Mucosa of descending colon (tissue), 3 donors: ENCODE measurements at regions of chr16 and their contacts with region 1.

Region 1: DNA sequence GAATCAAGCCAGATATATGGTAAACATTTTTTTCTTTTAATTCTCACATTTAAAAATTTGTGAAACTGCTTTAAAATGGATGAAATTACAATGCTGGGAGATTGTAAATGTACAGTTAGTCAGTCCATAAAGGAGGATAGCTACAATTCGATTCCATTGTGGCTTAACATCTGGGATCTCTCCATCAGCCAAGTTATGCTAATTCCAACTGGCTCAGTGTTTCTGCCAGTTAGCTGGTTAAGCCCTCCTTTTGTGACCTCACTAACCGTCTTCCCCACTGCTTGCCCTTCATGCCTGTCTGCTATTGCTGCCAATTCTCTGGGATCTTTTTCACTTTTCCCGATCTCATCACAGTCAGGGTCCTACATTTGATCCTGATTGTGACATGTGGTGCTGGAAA is 1347.6 kb downstream of the CDH11 start:
- DNase-seq: no peak
- ATAC-seq: no peak
- H3K4me3 ChIP-seq: no peak overlapping the region
- H3K4me1 ChIP-seq: no peaks in the 10 kb centered on the region
- CTCF ChIP-seq: no peak

Region 2: GRCh38 chr16:63385714-63386432 is 388.4 kb before region 1 on chr16:
- intact Hi-C with region 1: no loop called
- DNase-seq: no peak
- ATAC-seq: no peak
- H3K4me3 ChIP-seq: no peak overlapping the region
- H3K4me1 ChIP-seq: no peaks in the 10 kb centered on the region
- CTCF ChIP-seq: no peak

Region 3: GRCh38 chr16:63702984-63703590 is 71.2 kb before region 1 on chr16:
- intact Hi-C with region 1: no loop called
- DNase-seq: no peak
- ATAC-seq: no peak
- H3K4me3 ChIP-seq: no peak overlapping the region
- H3K4me1 ChIP-seq: no peaks in the 10 kb centered on the region
- CTCF ChIP-seq: no peak

Region 4: DNA sequence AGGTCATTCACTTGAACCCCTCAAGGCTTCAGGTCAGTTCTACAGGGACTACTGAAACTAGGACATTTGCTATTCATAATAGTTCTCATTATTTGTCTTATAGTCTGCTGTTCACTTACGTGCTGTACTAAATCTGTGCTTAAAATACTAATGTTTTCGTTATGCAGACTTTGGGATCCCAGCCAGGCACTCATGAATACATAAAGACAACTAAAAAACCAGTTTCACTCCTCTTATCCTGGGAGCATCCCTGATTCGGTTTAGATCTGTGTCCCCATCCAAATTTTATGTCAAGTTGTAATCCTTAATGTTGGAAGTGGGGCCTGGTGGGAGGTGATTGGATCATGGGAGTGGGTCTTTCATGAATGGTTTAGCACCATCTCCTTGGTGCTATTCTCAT is 55.8 kb after region 1 on chr16:
- intact Hi-C with region 1: loop called in 1 of 2 experiments (anchors 10 kb)
- DNase-seq: no peak
- ATAC-seq: no peak
- H3K4me3 ChIP-seq: no peak overlapping the region
- H3K4me1 ChIP-seq: no peaks in the 10 kb centered on the region
- CTCF ChIP-seq: no peak

Region 5: DNA sequence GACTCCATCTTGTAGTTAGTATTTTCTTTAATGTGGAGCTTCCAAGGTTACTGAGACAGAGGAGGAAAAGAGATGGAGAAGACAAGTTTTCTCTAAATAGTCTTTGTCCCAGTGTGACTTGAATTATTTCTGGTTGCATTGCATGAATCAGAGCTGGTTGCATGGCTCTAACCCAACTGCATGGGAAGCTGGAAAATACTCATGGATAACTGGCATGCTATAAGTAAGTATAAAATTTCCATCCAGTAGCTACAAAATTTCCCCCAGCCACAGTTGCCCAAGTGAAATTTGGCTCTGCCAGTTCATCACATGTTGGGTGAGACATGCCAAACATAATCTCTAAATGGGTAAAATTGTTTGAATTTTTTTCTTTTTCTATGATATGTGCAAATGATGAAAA is 186.0 kb after region 1 on chr16:
- intact Hi-C with region 1: no loop called
- DNase-seq: no peak
- ATAC-seq: no peak
- H3K4me3 ChIP-seq: no peak overlapping the region
- H3K4me1 ChIP-seq: no peaks in the 10 kb centered on the region
- CTCF ChIP-seq: no peak